Naive thymus-derived CD8-positive, alpha-beta T cell (primary cell): ENCODE measurements at regions of chr22 and their contacts with region 1.

Region 1: GRCh38 chr22:39395936-39396796 is 3.4 kb upstream of the TAB1 start:
- DNase-seq: no peak
- ATAC-seq: no peak
- H3K4me3 Mint-ChIP-seq: peak overlapping the region in 2 of 10 donors; percentile 20 to 21
- H3K27ac Mint-ChIP-seq: peak overlapping the region in 3 of 10 donors; percentile 17 to 48 (median 35)
- H3K4me1 Mint-ChIP-seq: peaks cover under 1 to 11% (median 7%) of the 10 kb centered on the region in 4 donors
- H3K27me3 Mint-ChIP-seq: no peaks in the 10 kb centered on the region

Region 2: GRCh38 chr22:39380999-39381755 is 15.0 kb before region 1 on chr22:
- POLR2A ChIA-PET with region 1: interaction called, 11 read pairs
- DNase-seq: no peak
- ATAC-seq: no peak
- H3K4me3 Mint-ChIP-seq: no peak overlapping the region
- H3K27ac Mint-ChIP-seq: peak overlapping the region in 2 of 10 donors; percentile 40 to 87
- H3K4me1 Mint-ChIP-seq: peaks cover 0 to under 1% (median 0%) of the 10 kb centered on the region in 4 donors
- H3K27me3 Mint-ChIP-seq: no peaks in the 10 kb centered on the region

Region 3: DNA sequence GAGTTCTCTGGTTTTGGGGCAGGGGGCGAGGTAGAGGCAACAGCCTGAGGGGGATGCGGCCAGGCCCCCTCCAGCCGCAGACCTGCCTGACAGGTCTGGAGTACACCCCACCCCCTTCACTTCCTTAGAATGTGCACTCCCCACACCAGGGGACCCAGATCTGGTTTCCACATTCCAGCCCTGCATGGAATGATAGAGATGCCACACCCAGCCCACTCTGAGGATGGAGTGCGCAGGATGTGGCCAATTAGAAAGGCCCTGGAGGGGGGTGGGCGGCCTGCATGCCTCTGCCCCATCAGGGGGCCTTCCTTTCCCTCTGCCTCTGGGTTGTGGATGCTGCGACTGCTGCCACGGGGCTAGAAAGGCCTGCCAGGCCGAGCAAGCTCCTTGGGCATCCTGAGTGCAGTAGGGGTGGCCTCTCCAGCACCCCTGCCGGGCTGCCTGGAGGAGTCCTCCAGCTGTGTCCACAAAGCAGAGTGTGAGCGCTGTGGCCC is 32.5 kb after region 1 on chr22:
- POLR2A ChIA-PET with region 1: no interaction called
- DNase-seq: no peak
- ATAC-seq: no peak
- H3K4me3 Mint-ChIP-seq: no peak overlapping the region
- H3K27ac Mint-ChIP-seq: no peak overlapping the region
- H3K4me1 Mint-ChIP-seq: no peaks in the 10 kb centered on the region
- H3K27me3 Mint-ChIP-seq: no peaks in the 10 kb centered on the region